SK-MEL-5 (cell line): ENCODE measurements at regions of chr2 and their contacts with region 1.

Region 1: GRCh38 chr2:177618255-177619253 is 226.0 kb downstream of the AGPS start:
- DNase-seq: peak; percentile 88

Region 2: DNA sequence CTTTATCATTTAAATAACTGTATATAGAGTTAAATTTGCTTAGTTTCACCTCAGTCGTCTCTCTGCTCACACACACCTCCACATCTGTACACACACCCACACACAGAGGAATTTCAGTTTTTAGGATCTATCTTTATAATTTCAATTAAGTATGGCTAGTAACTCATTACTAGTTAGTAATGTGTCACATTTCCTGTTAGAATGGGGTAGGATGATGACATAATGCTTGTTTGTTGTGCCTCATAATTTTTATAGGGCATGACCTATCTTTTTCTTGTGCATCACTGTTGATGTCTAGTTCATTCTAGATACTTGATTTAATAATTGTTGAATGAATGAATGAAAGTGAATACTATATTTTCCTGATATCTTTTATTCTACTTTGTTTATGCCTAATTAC is 117.4 kb before region 1 on chr2:
- in situ Hi-C with region 1: loop called (anchors 25 kb)
- DNase-seq: no peak

Region 3: DNA sequence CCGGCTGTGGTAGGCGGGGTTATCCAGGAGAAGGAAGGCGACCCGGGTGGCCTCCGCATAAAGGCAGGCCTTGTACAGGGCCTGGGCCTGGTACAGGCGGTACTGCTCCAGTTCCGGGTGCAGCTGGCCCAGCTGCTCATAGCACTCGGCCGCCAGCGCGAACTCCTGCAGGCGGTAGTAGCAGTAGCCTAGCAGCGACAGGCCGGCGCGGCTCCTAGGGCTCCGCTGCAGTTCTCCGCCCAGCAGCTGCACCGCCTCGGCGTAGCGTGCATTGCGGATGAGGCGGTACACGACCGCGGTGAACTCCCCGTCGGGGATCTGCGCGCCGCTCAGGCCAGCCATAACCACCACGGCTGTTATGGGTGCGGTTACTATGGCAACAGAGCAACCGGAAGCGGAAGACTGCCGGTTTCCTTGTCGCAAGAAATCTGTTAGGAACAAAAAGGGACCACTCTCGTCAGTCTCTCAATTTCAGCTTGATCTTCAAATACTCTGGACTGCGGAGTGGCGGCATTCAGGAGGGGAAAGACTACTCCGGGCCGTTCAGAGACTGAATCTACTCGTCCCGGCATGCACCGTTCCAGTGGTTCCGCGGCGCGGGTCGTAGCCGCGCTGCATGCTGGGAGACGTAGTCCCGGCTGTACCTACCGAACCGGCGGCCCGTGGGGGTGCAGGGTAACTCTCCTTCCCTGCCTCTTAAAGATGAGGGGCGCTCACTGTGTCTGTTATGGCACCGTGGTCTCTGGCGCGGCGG is 66.0 kb before region 1 on chr2:
- in situ Hi-C with region 1: no loop called
- DNase-seq: peak; percentile 88

Region 4: GRCh38 chr2:177746358-177746757 is 127.8 kb after region 1 on chr2:
- in situ Hi-C with region 1: no loop called
- DNase-seq: no peak

Region 5: GRCh38 chr2:178163395-178163794 is 544.8 kb after region 1 on chr2:
- in situ Hi-C with region 1: no loop called
- DNase-seq: peak; percentile 46